HCT116 (cell line): ENCODE measurements at regions of chr15 and their contacts with region 1.

Region 1: GRCh38 chr15:50354838-50355618 is at the start of gene GABPB1:
- DNase-seq: peak; percentile 92
- ATAC-seq: peak; percentile 80
- H3K4me3 ChIP-seq: peak within 1 kb of the TSS; percentile 63 to 78
- H3K27ac ChIP-seq: peak within 1 kb of the TSS; percentile 99
- H3K4me1 ChIP-seq: peaks cover 14 to 20% of the 10 kb centered on the region in 2 experiments
- H3K27me3 ChIP-seq: no peaks in the 10 kb centered on the region
- CTCF ChIP-seq: no peak
- POLR2A ChIP-seq: peak; percentile 76
- RAD21 ChIP-seq: no peak
- total RNA-seq, gene GABPB1: 20.1 TPM

Region 2: DNA sequence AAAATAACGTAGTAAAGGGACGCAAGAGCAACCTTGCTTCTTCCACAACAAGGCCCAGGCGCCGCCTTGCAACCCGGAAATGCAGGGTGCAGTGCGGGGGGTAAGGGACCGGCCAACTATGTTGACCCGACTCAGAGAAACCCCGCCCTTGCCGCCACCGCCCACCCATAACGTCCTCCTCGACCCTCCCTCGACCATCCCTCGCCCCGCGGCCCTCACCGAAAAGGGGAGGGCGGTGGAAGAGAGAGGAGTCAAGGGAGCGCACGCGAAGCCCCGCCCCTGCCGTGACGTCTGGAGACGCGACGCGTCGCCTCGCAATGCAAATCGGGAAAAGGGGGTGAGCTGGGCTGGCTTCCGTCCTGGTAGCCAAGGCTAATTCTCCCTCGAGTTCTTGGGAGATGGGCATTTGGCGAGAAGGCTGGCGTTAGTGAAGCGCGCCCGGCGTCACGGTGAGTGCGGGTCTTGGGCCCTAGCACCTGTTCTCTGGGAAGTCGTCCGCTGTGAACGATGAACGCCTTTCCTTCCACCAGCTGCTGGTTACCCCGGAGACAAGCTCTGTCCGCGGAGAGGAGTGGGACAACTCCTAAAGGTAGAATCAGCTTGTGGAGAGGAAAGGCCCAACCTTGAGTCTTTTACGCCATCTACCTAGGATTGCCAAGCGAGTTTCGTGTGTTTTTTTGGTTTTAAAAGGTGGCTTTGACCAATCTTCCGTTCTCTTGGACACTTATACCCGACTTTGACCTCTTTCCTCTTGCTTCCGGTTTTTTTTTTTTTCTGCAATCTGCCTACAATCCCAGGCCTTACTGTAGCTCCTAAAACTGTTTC is 69.2 kb after region 1 on chr15 and contains the start of gene USP8:
- CTCF ChIA-PET with region 1: no interaction called
- POLR2A ChIA-PET with region 1: interaction called, 8 read pairs
- RAD21 ChIA-PET with region 1: no interaction called
- intact Hi-C with region 1: loop called (anchors 5 kb)
- DNase-seq: peak; percentile 94
- ATAC-seq: peak; percentile 97
- H3K4me3 ChIP-seq: peak within 1 kb of the TSS; percentile 62 to 76
- H3K27ac ChIP-seq: peak within 1 kb of the TSS; percentile 61
- H3K4me1 ChIP-seq: peaks cover 7 to 14% of the 10 kb centered on the region in 2 experiments
- H3K27me3 ChIP-seq: no peaks in the 10 kb centered on the region
- CTCF ChIP-seq: no peak
- POLR2A ChIP-seq: peak; percentile 80
- RAD21 ChIP-seq: no peak
- total RNA-seq, gene USP8: 67.9 TPM

Region 3: GRCh38 chr15:50908210-50909009 is 553.4 kb after region 1 on chr15 and contains the start of gene AP4E1:
- CTCF ChIA-PET with region 1: no interaction called
- POLR2A ChIA-PET with region 1: no interaction called
- RAD21 ChIA-PET with region 1: no interaction called
- intact Hi-C with region 1: loop called (anchors 5 kb)
- DNase-seq: peak; percentile 87
- ATAC-seq: peak; percentile 82
- H3K4me3 ChIP-seq: peak within 1 kb of the TSS; percentile 94
- H3K27ac ChIP-seq: peak within 1 kb of the TSS; percentile 88
- H3K4me1 ChIP-seq: peaks cover 10 to 21% of the 10 kb centered on the region in 2 experiments; a peak in 3 of 4 replicates
- H3K27me3 ChIP-seq: no peaks in the 10 kb centered on the region
- CTCF ChIP-seq: peak; percentile 65 to 84 (median 79); a peak in 5 of 6 replicates
- POLR2A ChIP-seq: peak; percentile 50
- RAD21 ChIP-seq: peak; percentile 91
- total RNA-seq, gene AP4E1: 10.1 TPM